Activated CD4-positive, alpha-beta memory T cell treated with anti-CD3 and anti-CD28 coated beads, Interleukin-2, amount 10 ng/mL, durations not matched to agents 7 days and 5 days (primary cell): ENCODE measurements at regions of chr1 and their contacts with region 1.

Region 1: GRCh38 chr1:23530747-23531561 is at the start of gene E2F2:
- DNase-seq: peak; percentile 88
- H3K4me3 Mint-ChIP-seq: peak within 1 kb of the TSS; percentile 99
- H3K27ac Mint-ChIP-seq: peak within 1 kb of the TSS; percentile 97
- H3K4me1 Mint-ChIP-seq: peaks cover 72% of the 10 kb centered on the region
- H3K27me3 Mint-ChIP-seq: peaks cover 2% of the 10 kb centered on the region
- total RNA-seq, gene E2F2: 93.4 to 98.9 TPM

Region 2: DNA sequence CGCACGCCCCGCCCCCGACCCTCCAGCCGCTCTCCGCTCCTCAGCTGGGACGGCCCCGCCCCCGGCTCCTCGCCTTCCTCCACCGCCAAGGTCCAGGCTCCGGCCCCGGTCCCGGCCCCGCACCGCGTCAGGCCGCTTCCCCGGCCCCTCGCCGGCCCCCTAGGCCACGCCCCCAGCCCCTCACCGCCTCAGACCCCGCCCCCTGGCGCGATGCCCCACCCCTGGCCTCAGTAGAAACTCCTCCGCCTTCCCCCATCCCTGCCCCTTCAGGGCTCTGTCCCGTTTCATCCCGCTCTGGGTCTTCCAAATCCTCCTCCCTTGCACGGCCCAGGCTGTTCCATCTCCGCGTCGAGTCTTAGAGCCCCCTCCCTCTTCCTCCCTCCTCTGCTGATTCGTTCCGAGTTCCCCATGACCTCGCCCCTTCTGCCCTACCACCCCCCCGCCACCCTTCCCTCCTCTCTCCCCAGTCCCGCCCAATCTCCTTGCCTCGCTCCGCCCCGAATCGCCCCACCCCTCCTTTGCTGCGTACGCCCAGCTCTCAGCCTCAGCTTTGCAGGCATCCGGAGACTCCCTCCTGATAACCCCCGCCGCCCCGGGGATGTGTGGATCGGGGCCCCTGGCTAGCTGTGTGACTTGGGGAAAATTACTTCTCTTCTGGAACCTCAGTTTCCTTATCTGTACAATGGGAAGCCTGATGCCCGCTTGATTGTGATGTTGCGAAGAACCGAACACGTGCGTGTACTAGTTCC is 46.5 kb before region 1 on chr1:
- CTCF ChIA-PET with region 1: interaction called, 5 read pairs
- POLR2A ChIA-PET with region 1: interaction called, 12 read pairs
- DNase-seq: peak; percentile 93
- H3K4me3 Mint-ChIP-seq: peak overlapping the region; percentile 77
- H3K27ac Mint-ChIP-seq: peak overlapping the region; percentile 31
- H3K4me1 Mint-ChIP-seq: peaks cover 26% of the 10 kb centered on the region
- H3K27me3 Mint-ChIP-seq: peaks cover 65% of the 10 kb centered on the region

Region 3: GRCh38 chr1:23507507-23507906 is 23.4 kb before region 1 on chr1:
- CTCF ChIA-PET with region 1: interaction called, 192 read pairs
- POLR2A ChIA-PET with region 1: interaction called, 122 read pairs
- DNase-seq: no peak
- H3K4me3 Mint-ChIP-seq: no peak overlapping the region
- H3K27ac Mint-ChIP-seq: no peak overlapping the region
- H3K4me1 Mint-ChIP-seq: peaks cover 6% of the 10 kb centered on the region
- H3K27me3 Mint-ChIP-seq: no peaks in the 10 kb centered on the region

Region 4: GRCh38 chr1:23559136-23559984 is 28.4 kb after region 1 on chr1 and contains the start of gene ID3:
- CTCF ChIA-PET with region 1: interaction called, 12 read pairs
- POLR2A ChIA-PET with region 1: interaction called, 55 read pairs
- DNase-seq: peak; percentile 94
- H3K4me3 Mint-ChIP-seq: peak within 1 kb of the TSS; percentile 84
- H3K27ac Mint-ChIP-seq: peak within 1 kb of the TSS; percentile 73
- H3K4me1 Mint-ChIP-seq: peaks cover 59% of the 10 kb centered on the region
- H3K27me3 Mint-ChIP-seq: peaks cover 52% of the 10 kb centered on the region
- total RNA-seq, gene ID3: 14.7 to 14.8 TPM

Region 5: DNA sequence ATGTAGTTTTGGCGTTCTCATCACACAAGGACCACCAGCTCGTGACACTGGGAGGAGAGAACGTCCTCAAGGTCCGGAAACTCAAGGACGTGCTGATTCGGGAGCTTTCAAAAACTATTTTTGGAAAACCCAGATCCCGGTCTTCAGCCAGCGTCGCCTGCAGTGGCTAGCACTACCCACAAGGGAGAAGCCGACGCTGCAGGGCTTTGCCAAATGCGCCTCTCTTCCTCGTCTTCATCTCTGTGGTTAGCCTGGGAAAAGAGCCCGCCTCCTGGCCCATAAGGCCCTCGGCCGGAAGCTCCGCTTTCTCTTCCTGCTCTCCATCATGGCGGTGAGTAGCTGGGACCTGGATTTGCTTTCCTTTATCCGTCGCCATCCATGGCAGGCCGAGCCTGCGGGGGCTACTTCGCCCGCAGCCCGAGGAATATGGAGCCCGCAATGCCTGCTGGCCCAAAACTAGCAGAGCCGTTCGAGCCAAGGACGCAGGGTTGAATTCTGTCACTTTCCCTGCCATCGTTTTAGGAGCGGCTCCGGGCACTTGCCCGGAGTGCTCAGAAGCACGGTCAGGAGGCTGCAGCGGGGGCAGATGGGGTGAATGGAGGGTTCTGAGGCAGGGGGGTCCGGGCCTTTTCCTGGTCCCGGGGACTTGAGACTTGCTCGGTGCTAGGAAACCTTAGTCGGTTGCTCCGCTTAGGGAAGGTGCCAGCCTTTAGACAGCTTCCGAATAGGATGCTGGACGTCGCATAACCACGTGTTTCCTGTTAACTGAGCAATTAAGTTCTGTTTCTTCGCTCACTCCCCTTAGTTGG is 160.7 kb after region 1 on chr1 and contains the start of gene RPL11:
- CTCF ChIA-PET with region 1: interaction called, 6 read pairs
- POLR2A ChIA-PET with region 1: interaction called, 17 read pairs
- DNase-seq: peak; percentile 89
- H3K4me3 Mint-ChIP-seq: peak within 1 kb of the TSS; percentile 94
- H3K27ac Mint-ChIP-seq: peak within 1 kb of the TSS; percentile 86
- H3K4me1 Mint-ChIP-seq: peaks cover 49% of the 10 kb centered on the region
- H3K27me3 Mint-ChIP-seq: no peaks in the 10 kb centered on the region
- total RNA-seq, gene RPL11: 1,074 to 1,084 TPM